Activated T-helper 1 cell treated with anti-CD3 and anti-CD28 coated beads, Interleukin-12 subunit alpha, Interleukin-12 subunit beta, Interleukin-2, Interleukin-4 antibody, amounts not matched to agents 30 ng/mL and 10 ng/mL and 1 ng/mL, durations not matched to agents 14 hours and 24 hours and 36 hours (primary cell): ENCODE measurements at regions of chr12 and their contacts with region 1.

Region 1: GRCh38 chr12:130818635-130819576 is 20.1 kb downstream of the STX2 start:
- DNase-seq: peak; percentile 72
- H3K4me3 Mint-ChIP-seq: peak overlapping the region; percentile 85
- H3K27ac Mint-ChIP-seq: peak overlapping the region; percentile 77
- H3K4me1 Mint-ChIP-seq: peaks cover 5% of the 10 kb centered on the region
- H3K27me3 Mint-ChIP-seq: no peaks in the 10 kb centered on the region

Region 2: GRCh38 chr12:130177635-130178245 is 641.2 kb before region 1 on chr12:
- intact Hi-C with region 1: no loop called
- DNase-seq: no peak
- H3K4me3 Mint-ChIP-seq: no peak overlapping the region
- H3K27ac Mint-ChIP-seq: no peak overlapping the region
- H3K4me1 Mint-ChIP-seq: no peaks in the 10 kb centered on the region
- H3K27me3 Mint-ChIP-seq: peaks cover 2% of the 10 kb centered on the region

Region 3: DNA sequence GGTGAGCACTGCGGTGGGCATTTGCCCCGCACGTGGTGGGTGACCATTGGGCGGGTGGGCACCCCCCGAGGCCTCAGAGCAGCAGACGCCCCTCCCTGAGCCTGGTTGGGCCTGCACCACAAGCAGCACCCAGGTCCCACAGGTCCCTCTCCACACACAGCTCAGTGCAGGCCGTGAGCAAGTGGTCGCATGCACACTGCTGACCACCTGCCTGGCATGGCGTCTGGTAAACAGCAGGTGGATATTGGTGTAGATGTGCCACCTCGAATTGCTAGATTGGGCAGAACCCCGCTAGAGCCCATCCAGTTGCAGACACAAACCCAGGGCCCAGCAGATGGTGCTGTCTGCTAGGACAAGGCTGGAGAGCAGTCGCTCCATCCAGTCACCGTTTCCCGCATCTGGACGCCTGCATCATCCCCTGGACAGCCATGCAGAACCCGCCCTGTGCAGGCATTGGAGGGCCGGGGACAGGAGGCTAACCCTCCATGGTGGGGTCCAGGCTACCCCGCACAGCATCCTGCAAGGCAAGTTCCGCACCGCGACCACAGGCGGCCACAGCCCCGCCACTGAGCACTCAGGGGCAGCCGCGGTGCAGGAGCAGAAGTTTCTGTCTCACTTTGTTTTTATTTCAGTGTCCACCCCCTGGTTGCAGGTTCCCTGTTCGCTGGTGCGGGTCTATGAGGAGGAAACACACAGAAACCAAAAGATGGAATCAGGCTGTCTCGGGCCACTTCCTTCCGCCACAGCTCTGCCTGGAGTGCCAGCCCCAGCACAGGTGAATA is 57.2 kb before region 1 on chr12:
- intact Hi-C with region 1: loop called (anchors 1 kb)
- DNase-seq: peak; percentile 22
- H3K4me3 Mint-ChIP-seq: peak overlapping the region; percentile 34
- H3K27ac Mint-ChIP-seq: no peak overlapping the region
- H3K4me1 Mint-ChIP-seq: no peaks in the 10 kb centered on the region
- H3K27me3 Mint-ChIP-seq: no peaks in the 10 kb centered on the region

Region 4: GRCh38 chr12:130775953-130776856 is 42.7 kb before region 1 on chr12:
- intact Hi-C with region 1: loop called (anchors 1 kb)
- DNase-seq: no peak
- H3K4me3 Mint-ChIP-seq: peak overlapping the region; percentile 69
- H3K27ac Mint-ChIP-seq: no peak overlapping the region
- H3K4me1 Mint-ChIP-seq: peaks cover 15% of the 10 kb centered on the region
- H3K27me3 Mint-ChIP-seq: peaks cover 26% of the 10 kb centered on the region

Region 5: DNA sequence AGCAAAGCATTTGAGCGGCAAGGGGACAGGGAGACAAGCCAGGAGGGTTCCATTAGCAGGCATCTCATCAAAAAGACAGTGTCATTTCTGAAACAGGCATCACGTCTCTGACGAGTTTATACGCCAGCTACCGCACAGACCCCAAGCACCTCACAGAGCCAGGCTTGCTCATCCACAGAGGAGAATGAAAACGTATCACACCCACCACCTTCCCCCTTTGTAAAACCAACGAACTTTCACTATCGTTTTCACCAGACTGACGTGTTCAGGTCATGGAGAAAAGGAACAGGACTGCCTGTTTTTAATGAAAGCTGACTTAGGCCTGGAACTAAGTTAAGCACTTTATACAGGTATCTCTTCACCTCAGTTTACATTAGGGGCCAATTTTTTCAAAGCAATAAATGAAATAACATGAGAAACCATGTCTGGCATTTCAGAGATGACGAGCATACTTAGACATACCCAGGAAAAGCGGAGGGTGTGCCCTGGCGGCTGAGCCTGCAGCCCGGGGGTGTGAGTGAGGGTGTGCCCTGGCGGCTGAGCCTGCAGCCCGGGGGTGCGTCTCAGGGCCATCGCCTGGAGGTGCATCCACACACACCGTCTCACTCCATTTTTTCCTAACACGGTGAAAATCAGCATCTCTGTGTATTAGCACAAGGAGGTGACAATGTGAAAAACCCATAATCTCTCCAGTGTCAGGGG is 21.8 kb before region 1 on chr12:
- intact Hi-C with region 1: loop called (anchors 2 kb)
- DNase-seq: peak; percentile 14
- H3K4me3 Mint-ChIP-seq: peak overlapping the region; percentile 32
- H3K27ac Mint-ChIP-seq: peak overlapping the region; percentile 65
- H3K4me1 Mint-ChIP-seq: peaks cover 15% of the 10 kb centered on the region
- H3K27me3 Mint-ChIP-seq: no peaks in the 10 kb centered on the region

Region 6: GRCh38 chr12:130838951-130839769 is 20.3 kb after region 1 on chr12 and contains the start of gene STX2:
- intact Hi-C with region 1: loop called (anchors 1 kb)
- DNase-seq: peak; percentile 87
- H3K4me3 Mint-ChIP-seq: peak within 1 kb of the TSS; percentile 85
- H3K27ac Mint-ChIP-seq: peak within 1 kb of the TSS; percentile 90
- H3K4me1 Mint-ChIP-seq: peaks cover 25% of the 10 kb centered on the region
- H3K27me3 Mint-ChIP-seq: no peaks in the 10 kb centered on the region
- total RNA-seq, gene STX2: 15.9 and 17.9 TPM in 2 replicates